ENCODE measurements at regions of chr10 and their contacts with region 1.

Region 1: GRCh38 chr10:80382989-80383388 is 25.4 kb upstream of the PRXL2A start:
- DNase-seq: peak; percentile 22
- H3K4me3 Mint-ChIP-seq: no peak overlapping the region
- H3K27ac Mint-ChIP-seq: no peak overlapping the region
- H3K4me1 Mint-ChIP-seq: peaks cover 16% of the 10 kb centered on the region
- H3K27me3 Mint-ChIP-seq: peaks cover 13% of the 10 kb centered on the region

Region 2: GRCh38 chr10:80344276-80344675 is 38.7 kb before region 1 on chr10:
- intact Hi-C with region 1: no loop called
- DNase-seq: no peak
- H3K4me3 Mint-ChIP-seq: no peak overlapping the region
- H3K27ac Mint-ChIP-seq: no peak overlapping the region
- H3K4me1 Mint-ChIP-seq: no peaks in the 10 kb centered on the region
- H3K27me3 Mint-ChIP-seq: no peaks in the 10 kb centered on the region

Region 3: GRCh38 chr10:80444646-80445319 is 61.8 kb after region 1 on chr10:
- intact Hi-C with region 1: loop called (anchors 1 kb)
- DNase-seq: peak; percentile 62
- H3K4me3 Mint-ChIP-seq: no peak overlapping the region
- H3K27ac Mint-ChIP-seq: peak overlapping the region; percentile 51
- H3K4me1 Mint-ChIP-seq: peaks cover 26% of the 10 kb centered on the region
- H3K27me3 Mint-ChIP-seq: peaks cover 22% of the 10 kb centered on the region

Region 4: DNA sequence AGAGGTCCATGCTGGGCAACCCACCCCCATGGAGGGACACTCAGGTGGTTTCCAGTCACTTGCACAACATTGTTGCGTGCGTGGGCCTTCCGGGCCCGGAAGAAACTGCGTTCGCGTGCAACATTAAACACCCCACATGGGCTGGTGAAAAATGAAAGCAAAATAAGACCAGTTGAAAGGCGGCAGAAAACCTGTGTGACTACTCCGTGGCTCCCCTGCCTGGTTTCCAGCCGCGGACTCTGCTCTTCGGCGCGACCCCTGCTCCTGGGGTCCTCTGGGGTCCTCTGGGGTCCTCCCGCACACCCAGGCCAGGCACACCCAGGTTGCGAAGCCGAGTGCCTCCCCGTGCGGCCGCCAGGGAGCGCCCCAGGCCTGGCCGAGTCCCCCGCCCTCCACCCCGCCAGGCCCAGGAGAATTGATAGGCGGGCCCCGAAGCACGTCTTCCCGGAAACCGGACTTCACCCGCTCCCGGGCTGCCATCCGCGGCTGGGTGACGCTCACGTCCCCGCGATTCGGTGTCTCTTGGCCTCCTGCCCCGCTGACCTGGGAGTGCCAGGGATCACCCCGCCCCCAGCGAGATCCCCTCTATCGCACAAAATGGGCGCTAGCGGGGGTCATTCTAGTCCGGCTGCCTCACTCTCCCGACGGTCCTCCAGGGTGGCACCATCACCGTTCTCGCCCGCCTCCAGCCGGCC is 152.8 kb after region 1 on chr10:
- intact Hi-C with region 1: loop called (anchors 10 kb)
- DNase-seq: peak; percentile 69
- H3K4me3 Mint-ChIP-seq: peak overlapping the region; percentile 90
- H3K27ac Mint-ChIP-seq: peak overlapping the region; percentile 95
- H3K4me1 Mint-ChIP-seq: peaks cover 30% of the 10 kb centered on the region
- H3K27me3 Mint-ChIP-seq: no peaks in the 10 kb centered on the region

Region 5: DNA sequence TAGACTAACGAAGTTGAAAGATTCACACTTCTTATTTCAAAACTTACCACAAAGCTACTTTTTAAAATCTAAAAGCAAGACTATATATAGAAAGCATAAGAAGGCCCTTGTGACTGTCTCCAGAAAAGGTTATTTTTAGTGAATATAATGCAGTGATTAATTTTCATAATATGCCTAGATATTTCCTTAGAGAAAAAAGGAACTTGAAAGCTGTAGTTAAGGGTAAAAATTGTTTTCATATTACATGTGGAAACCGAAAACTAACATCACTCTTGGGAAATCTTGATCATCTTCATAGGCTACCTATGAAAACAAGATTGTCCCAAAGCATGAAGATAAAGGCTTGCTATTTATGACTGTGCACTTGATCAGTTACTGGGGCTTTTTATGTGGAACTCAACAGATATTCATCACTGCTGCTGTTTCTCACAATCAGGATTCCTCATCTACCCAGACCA is 378.0 kb after region 1 on chr10:
- intact Hi-C with region 1: no loop called
- DNase-seq: no peak
- H3K4me3 Mint-ChIP-seq: no peak overlapping the region
- H3K27ac Mint-ChIP-seq: no peak overlapping the region
- H3K4me1 Mint-ChIP-seq: no peaks in the 10 kb centered on the region
- H3K27me3 Mint-ChIP-seq: no peaks in the 10 kb centered on the region

Region 6: GRCh38 chr10:80924063-80924952 is 541.3 kb after region 1 on chr10:
- intact Hi-C with region 1: loop called (anchors 10 kb)
- DNase-seq: no peak
- H3K4me3 Mint-ChIP-seq: no peak overlapping the region
- H3K27ac Mint-ChIP-seq: no peak overlapping the region
- H3K4me1 Mint-ChIP-seq: no peaks in the 10 kb centered on the region
- H3K27me3 Mint-ChIP-seq: peaks cover 2% of the 10 kb centered on the region